ENCODE measurements at regions of chr2 and their contacts with region 1.

Region 1: DNA sequence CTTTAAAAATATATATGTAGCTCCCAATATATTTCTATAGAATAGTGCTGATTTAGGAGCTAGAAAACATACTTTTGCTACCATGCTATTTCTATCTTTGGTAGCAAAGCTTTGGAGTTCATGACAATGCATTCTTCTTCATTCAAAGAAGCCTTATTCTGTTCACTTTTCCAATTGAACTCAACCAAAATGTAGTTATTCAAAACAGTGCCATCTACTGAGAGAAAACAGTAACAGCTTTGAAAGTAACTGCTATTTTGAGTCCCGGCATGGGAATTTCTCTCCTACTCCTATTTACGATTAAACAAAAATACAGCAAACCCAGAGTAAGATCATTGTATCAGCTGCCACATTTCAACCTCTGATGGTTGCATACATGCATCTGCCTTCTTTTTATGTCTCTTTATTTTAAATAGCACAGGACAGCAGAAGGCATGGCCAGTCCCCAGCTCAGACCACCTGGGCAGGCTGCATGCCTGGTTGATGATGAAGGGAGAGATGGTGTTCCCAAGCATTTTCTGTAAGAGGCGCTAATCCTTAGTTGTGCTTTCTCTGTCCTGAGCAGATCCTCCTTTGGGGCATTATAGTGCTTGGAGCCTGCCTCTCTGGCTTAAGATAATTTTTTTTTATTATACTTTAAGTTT is 69.7 kb upstream of the SULT1C3 start:
- DNase-seq: no peak

Region 2: GRCh38 chr2:107936433-107937359 is 233.4 kb before region 1 on chr2:
- intact Hi-C with region 1: loop called (anchors 10 kb)
- DNase-seq: peak in 25 of 42 donors; percentile 5 to 71 (median 24)